Head of caudate nucleus (tissue), 42 donors: ENCODE measurements at regions of chr1 and their contacts with region 1.

Region 1: GRCh38 chr1:69567652-69568420 is at the start of gene LRRC7:
- DNase-seq: peak; percentile 26 to 83 (median 69)

Region 2: GRCh38 chr1:69661686-69662085 is 93.8 kb after region 1 on chr1:
- intact Hi-C with region 1: loop called (anchors 5 kb)
- DNase-seq: no peak